ENCODE measurements at regions of chr15 and their contacts with region 1.

Region 1: GRCh38 chr15:23483821-23484299 is 36.8 kb upstream of the GOLGA6L2 start:
- DNase-seq: no peak
- ATAC-seq: peak; percentile 57 to 91 (median 77)
- H3K4me3 ChIP-seq: no peak overlapping the region
- H3K27ac ChIP-seq: peak overlapping the region in 5 of 12 donors; percentile 10 to 64 (median 47)
- H3K4me1 ChIP-seq: peaks cover 0 to 11% (median 0%) of the 10 kb centered on the region in 12 donors
- H3K27me3 ChIP-seq: no peaks in the 10 kb centered on the region
- CTCF ChIP-seq: no peak
- POLR2A ChIP-seq: no peak

Region 2: DNA sequence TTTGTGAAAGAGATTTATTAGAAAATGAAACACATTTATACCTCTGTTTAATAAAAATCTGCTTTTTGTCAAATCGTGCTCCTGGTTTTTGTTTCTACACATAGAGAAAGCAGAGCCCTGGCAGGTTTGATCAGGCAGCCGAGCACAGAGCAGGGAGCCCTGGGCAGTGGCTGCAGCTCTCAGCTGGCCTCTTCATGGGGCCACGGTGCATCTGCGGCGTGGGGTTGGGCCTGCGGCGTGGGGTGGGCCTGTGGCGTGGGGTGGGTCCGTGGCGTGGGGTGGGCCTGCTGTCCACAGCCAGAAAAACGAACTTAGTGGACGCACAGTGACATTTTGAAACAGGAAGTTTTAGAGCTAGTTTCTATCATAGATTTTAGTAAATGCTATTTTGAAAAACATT is 47.4 kb before region 1 on chr15:
- intact Hi-C with region 1: no loop called
- DNase-seq: no peak
- ATAC-seq: no peak
- H3K4me3 ChIP-seq: no peak overlapping the region
- H3K27ac ChIP-seq: no peak overlapping the region
- H3K4me1 ChIP-seq: no peaks in the 10 kb centered on the region
- H3K27me3 ChIP-seq: no peaks in the 10 kb centered on the region
- CTCF ChIP-seq: no peak
- POLR2A ChIP-seq: no peak

Region 3: DNA sequence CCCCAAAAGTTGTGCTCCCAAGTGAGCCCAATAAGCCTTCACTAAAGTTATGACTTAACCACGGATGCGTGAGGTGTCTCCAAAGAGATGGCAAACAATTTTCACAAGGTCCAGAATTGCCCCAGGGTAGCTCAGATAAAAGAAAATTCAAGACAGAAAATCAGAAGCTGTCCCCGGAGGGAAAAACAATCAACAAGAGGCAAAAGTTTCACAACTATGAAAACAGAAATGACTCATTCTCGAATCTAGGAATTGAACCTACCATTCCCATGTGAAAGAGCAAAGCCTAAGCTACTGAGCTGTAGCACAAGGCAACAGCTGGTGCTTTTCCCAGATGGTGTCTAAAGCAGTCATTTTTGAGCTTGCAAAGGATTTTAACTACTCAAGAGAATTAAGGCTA is 48.2 kb after region 1 on chr15:
- intact Hi-C with region 1: loop called in 1 of 10 experiments (anchors 5 kb)
- DNase-seq: no peak
- ATAC-seq: no peak
- H3K4me3 ChIP-seq: no peak overlapping the region
- H3K27ac ChIP-seq: no peak overlapping the region
- H3K4me1 ChIP-seq: no peaks in the 10 kb centered on the region
- H3K27me3 ChIP-seq: peaks cover 0 to 6% (median 0%) of the 10 kb centered on the region in 9 donors
- CTCF ChIP-seq: no peak
- POLR2A ChIP-seq: no peak

Region 4: GRCh38 chr15:23548071-23548470 is 64.2 kb after region 1 on chr15:
- intact Hi-C with region 1: loop called in 1 of 10 experiments (anchors 10 kb)
- DNase-seq: no peak
- ATAC-seq: no peak
- H3K4me3 ChIP-seq: no peak overlapping the region
- H3K27ac ChIP-seq: no peak overlapping the region
- H3K4me1 ChIP-seq: no peaks in the 10 kb centered on the region
- H3K27me3 ChIP-seq: no peaks in the 10 kb centered on the region
- CTCF ChIP-seq: no peak
- POLR2A ChIP-seq: no peak

Region 5: DNA sequence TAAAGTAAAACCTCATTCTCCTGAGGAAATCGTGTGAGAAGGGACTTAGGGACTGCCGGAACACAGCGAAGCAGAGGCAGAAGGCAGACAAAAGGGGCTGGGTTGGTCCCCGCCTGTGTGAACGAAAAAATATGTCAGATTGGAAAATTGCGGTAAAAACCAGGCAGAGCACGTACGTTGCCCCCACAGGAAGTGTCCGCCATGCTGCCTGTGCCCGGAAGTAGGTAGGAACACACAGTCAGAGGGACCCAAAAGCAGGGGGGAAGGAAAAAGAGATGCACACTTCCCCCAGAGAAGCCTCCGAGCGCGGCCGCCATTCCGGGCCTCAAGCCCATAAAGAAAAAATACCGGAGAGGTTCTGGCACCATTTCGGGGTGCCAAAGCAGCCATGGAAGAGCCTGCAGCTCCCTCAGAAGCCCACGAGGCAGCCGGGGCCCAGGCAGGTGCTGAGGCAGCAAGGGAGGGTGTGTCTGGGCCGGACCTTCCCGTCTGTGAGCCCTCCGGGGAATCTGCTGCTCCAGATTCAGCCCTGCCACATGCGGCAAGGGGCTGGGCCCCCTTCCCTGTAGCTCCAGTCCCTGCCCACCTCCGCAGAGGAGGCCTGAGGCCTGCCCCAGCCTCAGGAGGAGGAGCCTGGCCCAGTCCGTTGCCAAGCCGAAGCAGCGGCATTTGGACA is 81.7 kb after region 1 on chr15 and contains the start of gene MKRN3:
- intact Hi-C with region 1: no loop called
- DNase-seq: no peak
- ATAC-seq: peak in 1 of 4 donors; percentile 20
- H3K4me3 ChIP-seq: peak within 1 kb of the TSS in 5 of 12 donors; percentile 16 to 49 (median 20)
- H3K27ac ChIP-seq: peak within 1 kb of the TSS in 1 of 12 donors; percentile 29
- H3K4me1 ChIP-seq: no peaks in the 10 kb centered on the region
- H3K27me3 ChIP-seq: peaks cover 0 to 13% (median 6%) of the 10 kb centered on the region in 9 donors
- CTCF ChIP-seq: no peak
- POLR2A ChIP-seq: no peak
- total RNA-seq, gene MKRN3: 0.13 to 0.45 (median 0.33) TPM in 3 of 9 donors, not detected in the others

Region 6: GRCh38 chr15:23983500-23984259 is 499.8 kb after region 1 on chr15:
- intact Hi-C with region 1: no loop called
- DNase-seq: no peak
- ATAC-seq: no peak
- H3K4me3 ChIP-seq: no peak overlapping the region
- H3K27ac ChIP-seq: no peak overlapping the region
- H3K4me1 ChIP-seq: no peaks in the 10 kb centered on the region
- H3K27me3 ChIP-seq: no peaks in the 10 kb centered on the region
- CTCF ChIP-seq: no peak
- POLR2A ChIP-seq: no peak